B cell (primary cell): ENCODE measurements at regions of chr2 and their contacts with region 1.

Region 1: DNA sequence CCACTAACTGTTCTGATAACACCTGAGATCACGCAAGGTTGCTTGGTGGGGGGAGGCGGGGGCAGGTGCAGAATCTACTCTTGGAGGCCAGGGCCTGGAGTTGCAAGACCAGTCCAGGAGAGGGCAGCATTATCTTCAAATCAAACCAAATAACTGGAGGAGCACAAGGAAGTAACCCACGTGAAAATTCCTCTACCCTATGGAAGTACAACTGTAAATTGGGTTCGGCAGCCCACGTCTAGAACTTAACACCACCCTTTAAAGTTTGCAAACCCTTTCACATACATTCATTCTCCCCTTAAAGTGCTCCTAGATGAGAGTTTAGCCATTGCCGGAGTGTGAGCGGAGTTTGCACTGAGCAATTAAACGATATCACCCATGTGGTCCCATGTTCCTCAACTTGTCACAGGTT is 19.6 kb upstream of the CXCR1 start:
- DNase-seq: peak; percentile 82
- ATAC-seq: peak; percentile 91
- H3K4me3 ChIP-seq: no peak overlapping the region
- H3K4me3 Mint-ChIP-seq: no peak overlapping the region
- H3K27ac ChIP-seq: no peak overlapping the region
- H3K27ac Mint-ChIP-seq: peak overlapping the region; percentile 26
- H3K4me1 ChIP-seq: peaks cover 2 to 7% of the 10 kb centered on the region in 2 donors
- H3K4me1 Mint-ChIP-seq: peaks cover 6% of the 10 kb centered on the region
- H3K27me3 ChIP-seq: peaks cover 0 to 8% (median 2%) of the 10 kb centered on the region in 4 experiments
- H3K27me3 Mint-ChIP-seq: peaks cover 7% of the 10 kb centered on the region
- CTCF ChIP-seq: peak; percentile 88

Region 2: DNA sequence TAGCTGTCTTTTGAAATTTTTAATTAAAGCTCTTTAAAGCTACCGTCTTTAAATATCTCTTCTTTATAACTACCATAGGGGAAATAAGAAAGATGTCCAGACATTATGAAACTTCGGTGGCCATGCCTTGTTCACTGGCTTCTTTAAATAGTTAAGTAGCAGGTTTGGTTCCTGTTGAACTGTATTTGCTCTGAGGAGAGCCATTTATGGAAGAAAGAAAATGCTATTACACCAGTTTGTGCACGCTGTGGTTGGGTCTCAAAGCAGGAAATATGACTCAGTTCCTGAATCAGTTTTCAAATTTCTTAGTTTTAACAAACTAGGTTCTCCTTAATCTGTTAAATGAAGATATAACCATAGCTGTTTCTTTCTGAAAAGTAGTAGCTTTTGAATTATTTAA is 42.9 kb after region 1 on chr2:
- CTCF ChIA-PET with region 1: interaction called, 4 read pairs
- POLR2A ChIA-PET with region 1: no interaction called
- intact Hi-C with region 1: loop called (anchors 2 kb)
- DNase-seq: peak; percentile 54
- ATAC-seq: peak; percentile 86
- H3K4me3 ChIP-seq: no peak overlapping the region
- H3K4me3 Mint-ChIP-seq: peak overlapping the region; percentile 65
- H3K27ac ChIP-seq: peak overlapping the region; percentile 36 to 60
- H3K27ac Mint-ChIP-seq: peak overlapping the region; percentile 84
- H3K4me1 ChIP-seq: peaks cover 44 to 53% of the 10 kb centered on the region in 2 donors
- H3K4me1 Mint-ChIP-seq: peaks cover 55% of the 10 kb centered on the region
- H3K27me3 ChIP-seq: no peaks in the 10 kb centered on the region
- H3K27me3 Mint-ChIP-seq: no peaks in the 10 kb centered on the region
- CTCF ChIP-seq: no peak